HCT116 (cell line): ENCODE measurements at regions of chr11 and their contacts with region 1.

Region 1: DNA sequence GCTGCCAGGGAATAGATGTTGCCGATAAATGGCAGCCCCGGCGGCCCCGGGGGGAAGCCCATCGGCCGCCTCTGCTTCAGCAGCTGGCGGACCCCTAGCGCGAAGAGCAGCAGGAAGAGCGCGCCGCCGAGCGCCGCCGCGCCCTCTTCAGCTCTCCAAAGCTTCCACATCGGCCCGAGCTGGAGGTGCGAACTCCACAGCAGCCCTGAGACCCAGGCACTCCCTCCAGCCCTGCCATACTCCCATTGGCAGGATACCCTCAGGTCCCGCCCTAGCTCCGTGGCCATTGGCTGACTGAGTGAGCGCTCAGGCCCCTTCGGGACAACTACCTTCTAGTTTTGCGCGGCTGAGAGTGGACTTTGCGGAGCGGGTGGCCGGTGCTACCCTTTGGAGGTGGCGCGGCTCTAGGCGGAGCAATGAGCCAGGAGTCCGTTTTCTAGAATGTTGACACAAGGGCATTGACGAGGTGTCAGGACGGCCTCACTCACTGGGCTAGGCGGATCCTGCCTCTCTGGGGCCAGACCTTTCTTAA is at the start of gene CYP2R1:
- DNase-seq: peak; percentile 97
- ATAC-seq: peak; percentile 95
- H3K4me3 ChIP-seq: peak within 1 kb of the TSS; percentile 57 to 62
- H3K27ac ChIP-seq: peak within 1 kb of the TSS; percentile 87
- H3K4me1 ChIP-seq: peaks cover 5 to 24% of the 10 kb centered on the region in 2 experiments; a peak in 3 of 4 replicates
- H3K27me3 ChIP-seq: no peaks in the 10 kb centered on the region
- CTCF ChIP-seq: no peak
- POLR2A ChIP-seq: no peak
- RAD21 ChIP-seq: no peak
- total RNA-seq, gene CYP2R1: 18.3 TPM

Region 2: DNA sequence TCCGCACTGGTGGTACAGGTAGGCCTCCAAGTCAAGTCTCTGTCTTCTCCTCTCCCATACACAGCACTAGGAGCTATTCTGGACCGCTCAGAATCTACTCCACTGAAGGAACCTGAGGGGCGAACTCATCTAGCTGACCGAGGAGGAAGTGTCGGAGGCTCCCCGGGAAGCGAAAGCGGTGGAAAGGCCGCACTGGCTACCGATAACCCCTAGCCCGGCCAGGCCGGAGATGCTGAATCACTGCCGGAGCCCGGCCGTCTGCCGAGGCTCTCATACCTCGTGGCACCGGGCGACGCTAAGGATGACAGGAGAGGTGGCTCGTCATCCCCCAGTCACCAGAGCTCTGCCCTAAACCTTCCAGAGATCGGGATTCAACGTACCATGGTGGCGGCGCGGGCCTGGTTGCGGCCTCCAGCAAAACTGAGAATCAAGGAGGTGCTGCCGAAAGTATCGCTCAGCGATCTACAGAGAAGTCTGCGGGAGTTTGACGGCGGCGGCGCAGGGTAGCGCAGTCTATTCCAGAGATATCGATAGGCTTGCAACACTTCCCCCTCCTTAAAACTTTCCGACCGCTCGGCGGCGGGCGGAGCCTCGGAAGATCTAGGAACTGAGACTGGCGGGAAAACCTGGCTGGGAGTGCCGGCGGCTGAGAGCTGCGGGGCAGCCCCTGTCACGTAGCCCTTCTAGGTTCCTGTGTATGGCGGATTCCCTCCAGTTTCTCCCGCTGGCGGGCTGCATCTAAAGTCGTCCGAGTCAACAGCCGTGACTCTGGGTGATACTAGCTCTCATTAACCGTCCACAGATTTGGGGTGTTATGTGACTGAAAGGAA is 372.0 kb before region 1 on chr11 and contains the start of gene PSMA1:
- CTCF ChIA-PET with region 1: no interaction called
- POLR2A ChIA-PET with region 1: no interaction called
- RAD21 ChIA-PET with region 1: no interaction called
- intact Hi-C with region 1: loop called (anchors 5 kb)
- DNase-seq: peak; percentile 89
- ATAC-seq: peak; percentile 92
- H3K4me3 ChIP-seq: peak within 1 kb of the TSS; percentile 57 to 95
- H3K27ac ChIP-seq: peak within 1 kb of the TSS; percentile 81
- H3K4me1 ChIP-seq: peaks cover 9 to 16% of the 10 kb centered on the region in 2 experiments; a peak in 3 of 4 replicates
- H3K27me3 ChIP-seq: no peaks in the 10 kb centered on the region
- CTCF ChIP-seq: no peak
- POLR2A ChIP-seq: peak; percentile 59
- RAD21 ChIP-seq: no peak
- total RNA-seq, gene PSMA1: 211 TPM

Region 3: DNA sequence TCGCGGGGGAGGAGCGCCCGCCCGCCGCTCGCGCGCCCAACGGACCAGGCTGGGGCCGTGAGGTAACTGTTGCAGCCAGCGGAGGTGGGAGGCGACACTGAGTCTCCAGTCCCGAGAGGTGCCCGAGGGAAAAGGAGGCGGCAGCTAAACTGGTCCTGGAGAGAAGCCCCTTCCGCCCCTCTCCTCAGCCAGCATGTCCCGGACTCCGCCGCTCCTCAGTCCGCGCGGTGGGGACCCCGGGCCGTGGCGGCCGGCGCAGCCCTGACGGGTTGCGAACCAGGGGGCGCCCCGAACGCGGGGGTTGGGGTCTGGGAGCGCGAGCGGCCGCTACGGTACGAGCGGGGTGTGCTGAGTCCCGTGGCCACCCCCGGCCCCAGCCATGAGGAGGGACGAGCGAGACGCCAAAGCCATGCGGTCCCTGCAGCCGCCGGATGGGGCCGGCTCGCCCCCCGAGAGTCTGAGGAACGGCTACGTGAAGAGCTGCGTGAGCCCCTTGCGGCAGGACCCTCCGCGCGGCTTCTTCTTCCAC is 248.3 kb before region 1 on chr11 and contains the start of gene PDE3B:
- CTCF ChIA-PET with region 1: no interaction called
- POLR2A ChIA-PET with region 1: no interaction called
- RAD21 ChIA-PET with region 1: no interaction called
- intact Hi-C with region 1: loop called (anchors 10 kb)
- DNase-seq: peak; percentile 59
- ATAC-seq: peak; percentile 91
- H3K4me3 ChIP-seq: peak within 1 kb of the TSS; percentile 71 to 81
- H3K27ac ChIP-seq: peak within 1 kb of the TSS; percentile 73
- H3K4me1 ChIP-seq: peaks cover 7 to 28% of the 10 kb centered on the region in 2 experiments; a peak in 3 of 4 replicates
- H3K27me3 ChIP-seq: peaks cover 9% of the 10 kb centered on the region; the same call in 1 of the 2 replicates
- CTCF ChIP-seq: 0 out of 6 replicates have a peak, but pooled peaks of 1 of the 3 experiments have one; percentile 7
- POLR2A ChIP-seq: peak; percentile 90
- RAD21 ChIP-seq: no peak
- total RNA-seq, gene PDE3B: 6.7 TPM

Region 4: GRCh38 chr11:14852571-14853177 is 39.4 kb before region 1 on chr11:
- CTCF ChIA-PET with region 1: no interaction called
- POLR2A ChIA-PET with region 1: interaction called, 4 read pairs
- RAD21 ChIA-PET with region 1: no interaction called
- intact Hi-C with region 1: loop called (anchors 5 kb)
- DNase-seq: peak; percentile 33
- ATAC-seq: no peak
- H3K4me3 ChIP-seq: no peak overlapping the region
- H3K27ac ChIP-seq: no peak overlapping the region
- H3K4me1 ChIP-seq: no peaks in the 10 kb centered on the region
- H3K27me3 ChIP-seq: no peaks in the 10 kb centered on the region
- CTCF ChIP-seq: no peak
- POLR2A ChIP-seq: no peak
- RAD21 ChIP-seq: no peak